AG04449 (cell line): ENCODE measurements at regions of chr6 and their contacts with region 1.

Region 1: DNA sequence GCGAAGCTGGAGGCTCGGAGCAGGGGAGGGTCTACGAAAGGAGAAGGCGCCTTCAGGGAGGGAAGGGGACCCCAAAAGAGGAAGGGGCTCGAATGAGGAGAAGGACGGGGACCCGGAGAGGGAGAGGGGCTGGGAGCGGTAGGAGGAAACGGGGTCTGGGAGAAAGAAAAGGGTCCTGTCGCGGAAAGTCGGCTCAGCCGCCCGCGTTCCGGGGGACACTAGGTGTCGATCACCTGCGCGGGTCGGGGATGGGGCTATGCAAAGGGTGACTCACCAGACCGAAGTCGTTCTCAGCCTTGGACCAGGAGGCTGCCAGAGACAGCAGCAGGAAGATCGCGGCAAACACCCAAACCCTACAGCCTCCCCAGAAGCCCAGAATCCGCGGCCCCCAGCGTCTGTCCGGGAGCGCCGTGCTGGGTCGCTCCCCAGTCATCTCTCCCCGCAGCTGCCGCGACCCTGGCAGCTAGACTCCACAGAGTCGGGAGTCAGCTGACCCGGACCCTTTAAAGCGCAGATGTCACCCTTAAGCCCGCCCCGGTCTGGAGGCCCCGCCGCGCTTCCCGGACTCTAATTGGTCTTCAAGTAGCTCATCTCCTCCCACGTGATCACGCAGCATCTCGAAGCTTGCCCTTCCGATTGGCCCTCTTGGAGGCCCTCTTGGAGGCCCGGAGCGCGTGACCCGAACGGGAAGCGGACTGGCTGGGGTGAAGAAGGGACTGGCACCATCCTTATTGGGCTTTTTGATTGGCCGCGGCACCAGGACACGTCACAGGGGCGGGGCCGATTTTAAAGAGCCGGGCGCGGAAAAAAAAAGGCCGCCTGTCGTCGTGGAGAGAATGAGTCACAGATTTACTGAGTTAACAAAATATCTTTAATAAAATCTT is at the start of gene NEU1:
- DNase-seq: peak; percentile 99
- H3K4me3 ChIP-seq: peak within 1 kb of the TSS; percentile 94
- CTCF ChIP-seq: no peak

Region 2: DNA sequence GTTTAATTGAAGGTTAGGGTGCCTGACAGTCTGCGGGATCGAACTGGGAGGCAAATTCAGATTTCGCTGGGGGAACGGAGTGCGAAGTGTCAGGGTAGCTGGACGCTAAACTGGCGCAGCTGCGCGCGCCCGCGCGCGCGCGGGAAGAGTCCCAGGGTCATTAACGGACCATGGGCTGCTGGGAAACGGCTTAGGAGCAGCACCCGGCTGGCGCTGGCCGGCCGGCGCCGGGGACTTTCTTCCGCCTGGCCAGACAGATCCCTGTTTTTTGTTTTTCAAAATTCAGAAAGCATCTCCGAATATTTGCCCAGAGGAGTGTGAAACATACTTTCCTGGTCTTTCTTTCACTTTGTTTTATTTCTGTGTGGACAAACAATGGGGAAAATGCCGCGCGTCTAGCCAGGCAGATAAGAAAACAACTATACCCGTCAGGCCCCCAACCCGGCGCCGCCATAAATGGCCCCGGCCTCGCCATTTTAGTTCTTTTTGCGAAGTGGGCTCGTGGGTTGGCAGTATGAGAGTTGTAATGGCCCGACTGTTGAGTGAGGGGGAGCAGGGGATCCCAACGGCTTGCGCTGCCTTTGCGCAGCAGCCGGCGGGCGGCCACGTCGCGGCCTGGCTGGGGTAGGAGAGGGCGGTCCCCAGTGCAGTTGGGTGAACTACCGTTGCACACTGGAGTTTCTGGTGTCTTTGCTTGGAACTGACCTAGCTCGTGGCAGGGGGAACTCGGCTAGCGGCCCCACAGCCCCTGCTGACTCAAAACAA is 28.0 kb before region 1 on chr6:
- CTCF ChIA-PET with region 1: interaction called, 4 read pairs
- POLR2A ChIA-PET with region 1: interaction called, 11 read pairs
- DNase-seq: no peak
- H3K4me3 ChIP-seq: peak overlapping the region; percentile 93
- CTCF ChIP-seq: no peak